ENCODE measurements at regions of chr1 and their contacts with region 1.

Region 1: GRCh38 chr1:160777486-160778089 is 18.4 kb upstream of the LY9 start:
- DNase-seq: no peak
- ATAC-seq: no peak
- H3K4me3 Mint-ChIP-seq: no peak overlapping the region
- H3K27ac Mint-ChIP-seq: peak overlapping the region; percentile 35
- H3K4me1 Mint-ChIP-seq: peaks cover 88% of the 10 kb centered on the region
- H3K27me3 Mint-ChIP-seq: no peaks in the 10 kb centered on the region
- CTCF ChIP-seq: no peak

Region 2: GRCh38 chr1:160618763-160619274 is 158.8 kb before region 1 on chr1:
- CTCF ChIA-PET with region 1: no interaction called
- POLR2A ChIA-PET with region 1: interaction called, 19 read pairs
- intact Hi-C with region 1: no loop called
- DNase-seq: no peak
- ATAC-seq: no peak
- H3K4me3 Mint-ChIP-seq: no peak overlapping the region
- H3K27ac Mint-ChIP-seq: peak overlapping the region; percentile 5
- H3K4me1 Mint-ChIP-seq: peaks cover 58% of the 10 kb centered on the region
- H3K27me3 Mint-ChIP-seq: no peaks in the 10 kb centered on the region
- CTCF ChIP-seq: no peak

Region 3: GRCh38 chr1:160789702-160790611 is 12.4 kb after region 1 on chr1:
- CTCF ChIA-PET with region 1: interaction called, 46 read pairs
- POLR2A ChIA-PET with region 1: interaction called, 52 read pairs
- intact Hi-C with region 1: loop called (anchors 1 kb)
- DNase-seq: peak; percentile 74
- ATAC-seq: peak; percentile 84
- H3K4me3 Mint-ChIP-seq: peak overlapping the region; percentile 59
- H3K27ac Mint-ChIP-seq: peak overlapping the region; percentile 98
- H3K4me1 Mint-ChIP-seq: peaks cover 44% of the 10 kb centered on the region
- H3K27me3 Mint-ChIP-seq: no peaks in the 10 kb centered on the region
- CTCF ChIP-seq: no peak

Region 4: DNA sequence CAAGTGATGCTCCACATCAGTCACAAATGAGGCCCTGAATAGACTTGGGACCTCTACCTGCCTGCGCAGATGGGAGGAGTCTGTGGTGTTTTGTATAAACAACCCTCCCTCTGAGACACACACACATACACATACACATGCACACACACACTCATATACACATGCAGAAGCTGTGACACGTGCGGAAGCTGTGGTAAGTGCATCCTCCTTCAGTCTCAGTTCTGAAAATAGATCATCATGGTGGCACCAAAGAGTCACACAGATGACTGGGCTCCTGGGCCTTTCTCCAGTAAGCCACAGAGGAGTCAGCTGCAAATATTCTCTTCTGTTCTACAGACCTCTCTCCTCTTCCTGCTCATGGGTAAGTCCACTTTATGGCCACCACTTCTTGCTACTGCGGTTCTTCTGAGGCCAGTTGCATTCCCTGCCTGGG is 18.4 kb after region 1 on chr1 and contains the start of gene LY9:
- CTCF ChIA-PET with region 1: interaction called, 46 read pairs
- POLR2A ChIA-PET with region 1: interaction called, 52 read pairs
- intact Hi-C with region 1: loop called (anchors 1 kb)
- DNase-seq: peak; percentile 46
- ATAC-seq: peak; percentile 87
- H3K4me3 Mint-ChIP-seq: peak within 1 kb of the TSS; percentile 95
- H3K27ac Mint-ChIP-seq: peak within 1 kb of the TSS; percentile 99
- H3K4me1 Mint-ChIP-seq: peaks cover 81% of the 10 kb centered on the region
- H3K27me3 Mint-ChIP-seq: no peaks in the 10 kb centered on the region
- CTCF ChIP-seq: no peak
- total RNA-seq, gene LY9: 63.6 and 71.6 TPM in 2 replicates

Region 5: DNA sequence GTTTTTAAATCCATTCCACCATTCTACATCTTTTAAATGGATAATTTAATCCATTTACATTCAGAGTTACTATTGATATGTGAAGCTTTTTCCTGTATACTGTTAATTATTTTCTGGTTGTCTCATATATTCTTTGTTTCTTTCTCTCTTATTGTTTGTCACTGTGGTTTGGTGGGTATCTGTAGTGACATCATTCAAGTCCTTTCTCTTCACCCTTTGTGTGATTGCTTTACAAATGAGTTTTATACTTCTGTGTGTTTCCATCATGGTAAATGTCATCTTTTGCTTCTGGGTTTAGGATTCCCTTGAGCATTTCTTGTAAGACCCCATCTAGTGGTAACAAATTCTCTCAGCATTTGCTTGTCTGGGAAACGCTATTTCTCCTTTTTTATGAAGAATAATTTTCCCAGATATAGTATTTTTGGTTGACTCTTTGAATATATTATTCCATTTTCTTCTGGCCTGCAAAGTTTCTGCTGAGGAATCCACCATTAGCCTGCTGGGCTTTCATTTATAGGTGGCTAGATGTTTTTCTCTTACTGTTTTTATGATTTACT is 28.6 kb after region 1 on chr1:
- CTCF ChIA-PET with region 1: interaction called, 16 read pairs
- POLR2A ChIA-PET with region 1: interaction called, 6 read pairs
- intact Hi-C with region 1: no loop called
- DNase-seq: no peak
- ATAC-seq: no peak
- H3K4me3 Mint-ChIP-seq: no peak overlapping the region
- H3K27ac Mint-ChIP-seq: no peak overlapping the region
- H3K4me1 Mint-ChIP-seq: peaks cover 66% of the 10 kb centered on the region
- H3K27me3 Mint-ChIP-seq: no peaks in the 10 kb centered on the region
- CTCF ChIP-seq: no peak

Region 6: GRCh38 chr1:160830321-160831153 is 52.9 kb after region 1 on chr1:
- CTCF ChIA-PET with region 1: interaction called, 38 read pairs
- POLR2A ChIA-PET with region 1: no interaction called
- intact Hi-C with region 1: loop called (anchors 1 kb)
- DNase-seq: peak; percentile 56
- ATAC-seq: peak; percentile 83
- H3K4me3 Mint-ChIP-seq: no peak overlapping the region
- H3K27ac Mint-ChIP-seq: peak overlapping the region; percentile 68
- H3K4me1 Mint-ChIP-seq: peaks cover 9% of the 10 kb centered on the region
- H3K27me3 Mint-ChIP-seq: no peaks in the 10 kb centered on the region
- CTCF ChIP-seq: no peak

Region 7: GRCh38 chr1:160951443-160952128 is 174.0 kb after region 1 on chr1:
- CTCF ChIA-PET with region 1: interaction called, 59 read pairs
- POLR2A ChIA-PET with region 1: interaction called, 3 read pairs
- intact Hi-C with region 1: loop called (anchors 1 kb)
- DNase-seq: peak; percentile 46
- ATAC-seq: peak; percentile 89
- H3K4me3 Mint-ChIP-seq: no peak overlapping the region
- H3K27ac Mint-ChIP-seq: no peak overlapping the region
- H3K4me1 Mint-ChIP-seq: peaks cover 7% of the 10 kb centered on the region
- H3K27me3 Mint-ChIP-seq: no peaks in the 10 kb centered on the region
- CTCF ChIP-seq: no peak

Measured in activated B cell treated with CpG ODN at 0.5 μM for 24 hours (primary cell).